Heart left ventricle (tissue), 16 donors: ENCODE measurements at regions of chr6 and their contacts with region 1.

Region 1: GRCh38 chr6:137707590-137708360 is 159.3 kb upstream of the TNFAIP3 start:
- DNase-seq: peak; percentile 61 to 72 (median 64)
- ATAC-seq: peak in 3 of 4 donors; percentile 60 to 68 (median 63)
- H3K4me3 ChIP-seq: peak overlapping the region in 6 of 12 donors; percentile 11 to 35 (median 24)
- H3K27ac ChIP-seq: peak overlapping the region in 2 of 12 donors; percentile 7 to 53
- H3K4me1 ChIP-seq: peaks cover 0 to 36% (median 15%) of the 10 kb centered on the region in 12 donors
- H3K27me3 ChIP-seq: no peaks in the 10 kb centered on the region
- CTCF ChIP-seq: peak; percentile 59 to 88 (median 82)
- POLR2A ChIP-seq: no peak

Region 2: DNA sequence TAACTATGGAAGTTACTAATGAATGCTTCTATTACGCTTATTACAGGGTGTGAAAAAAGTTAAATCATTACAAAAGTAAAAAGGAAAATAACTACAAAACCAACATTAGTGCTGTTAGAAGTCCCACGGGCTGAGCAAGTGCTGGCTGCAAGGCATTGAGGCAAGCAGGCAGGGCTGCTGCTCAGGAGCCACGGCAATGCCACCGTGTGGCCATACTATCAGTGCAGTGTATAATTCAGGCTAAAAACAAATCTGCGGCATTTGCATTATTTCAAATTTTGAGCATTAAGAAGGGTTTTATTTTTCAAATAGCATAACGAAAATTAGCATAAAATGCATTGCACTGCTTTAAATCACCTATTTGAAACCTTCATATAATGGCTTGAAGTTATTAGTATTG is 505.7 kb before region 1 on chr6:
- intact Hi-C with region 1: no loop called
- DNase-seq: peak in 3 of 5 donors; percentile 27 to 38 (median 33)
- ATAC-seq: peak; percentile 68 to 83 (median 77)
- H3K4me3 ChIP-seq: no peak overlapping the region
- H3K27ac ChIP-seq: no peak overlapping the region
- H3K4me1 ChIP-seq: peaks cover 0 to 44% (median 14%) of the 10 kb centered on the region in 12 donors
- H3K27me3 ChIP-seq: no peaks in the 10 kb centered on the region
- CTCF ChIP-seq: peak; percentile 20 to 61 (median 50)
- POLR2A ChIP-seq: no peak

Region 3: DNA sequence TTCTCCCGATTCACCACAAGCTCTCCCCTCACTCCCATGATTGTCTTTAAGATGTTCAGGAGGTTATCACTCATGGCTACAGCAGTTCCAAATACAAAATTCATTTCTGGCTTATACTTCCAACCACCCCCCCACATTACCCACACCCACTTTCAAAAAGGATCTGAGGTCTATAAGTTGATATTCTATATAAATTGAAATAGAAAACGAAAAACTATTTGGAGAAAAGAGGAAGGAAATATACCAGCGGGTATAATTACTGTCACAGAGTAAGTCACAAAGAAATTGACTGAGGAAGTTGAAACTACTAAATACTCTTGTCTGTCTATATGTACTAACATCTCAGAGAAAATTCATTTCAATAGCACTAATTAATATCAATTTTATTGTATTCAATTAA is 46.6 kb after region 1 on chr6:
- intact Hi-C with region 1: no loop called
- DNase-seq: no peak
- ATAC-seq: no peak
- H3K4me3 ChIP-seq: no peak overlapping the region
- H3K27ac ChIP-seq: peak overlapping the region in 1 of 12 donors; percentile 28
- H3K4me1 ChIP-seq: peaks cover 0 to 29% (median 0%) of the 10 kb centered on the region in 12 donors
- H3K27me3 ChIP-seq: no peaks in the 10 kb centered on the region
- CTCF ChIP-seq: no peak
- POLR2A ChIP-seq: no peak

Region 4: DNA sequence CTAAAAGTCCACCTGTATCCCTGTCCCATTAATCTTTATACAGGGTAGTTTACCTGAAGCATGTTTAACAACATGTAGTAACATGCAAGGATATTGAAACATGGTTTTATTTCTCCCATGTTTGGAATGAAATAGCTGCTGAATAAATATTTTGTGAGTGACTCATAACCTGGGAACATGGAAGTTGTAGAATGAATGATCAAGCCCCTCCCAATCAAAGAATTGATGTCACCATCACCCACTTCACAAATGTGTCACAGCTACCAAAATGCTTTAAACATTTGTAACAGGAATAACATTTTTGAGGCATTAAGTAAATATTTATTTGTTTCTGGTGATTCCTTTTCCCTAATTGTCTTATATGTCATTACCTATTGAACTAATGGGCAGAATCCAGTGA is 100.4 kb after region 1 on chr6:
- intact Hi-C with region 1: loop called in 3 of 10 experiments (anchors 5 kb)
- DNase-seq: no peak
- ATAC-seq: no peak
- H3K4me3 ChIP-seq: no peak overlapping the region
- H3K27ac ChIP-seq: no peak overlapping the region
- H3K4me1 ChIP-seq: peaks cover 0 to 44% (median 4%) of the 10 kb centered on the region in 12 donors
- H3K27me3 ChIP-seq: no peaks in the 10 kb centered on the region
- CTCF ChIP-seq: no peak
- POLR2A ChIP-seq: no peak

Region 5: GRCh38 chr6:137944793-137945498 is 237.2 kb after region 1 on chr6:
- intact Hi-C with region 1: loop called (anchors 1 to 5 kb)
- DNase-seq: no peak
- ATAC-seq: peak; percentile 59 to 88 (median 82)
- H3K4me3 ChIP-seq: peak overlapping the region in 1 of 12 donors; percentile 23
- H3K27ac ChIP-seq: no peak overlapping the region
- H3K4me1 ChIP-seq: peaks cover 0 to 16% (median 0%) of the 10 kb centered on the region in 12 donors
- H3K27me3 ChIP-seq: no peaks in the 10 kb centered on the region
- CTCF ChIP-seq: peak; percentile 63 to 88 (median 78)
- POLR2A ChIP-seq: no peak

Region 6: DNA sequence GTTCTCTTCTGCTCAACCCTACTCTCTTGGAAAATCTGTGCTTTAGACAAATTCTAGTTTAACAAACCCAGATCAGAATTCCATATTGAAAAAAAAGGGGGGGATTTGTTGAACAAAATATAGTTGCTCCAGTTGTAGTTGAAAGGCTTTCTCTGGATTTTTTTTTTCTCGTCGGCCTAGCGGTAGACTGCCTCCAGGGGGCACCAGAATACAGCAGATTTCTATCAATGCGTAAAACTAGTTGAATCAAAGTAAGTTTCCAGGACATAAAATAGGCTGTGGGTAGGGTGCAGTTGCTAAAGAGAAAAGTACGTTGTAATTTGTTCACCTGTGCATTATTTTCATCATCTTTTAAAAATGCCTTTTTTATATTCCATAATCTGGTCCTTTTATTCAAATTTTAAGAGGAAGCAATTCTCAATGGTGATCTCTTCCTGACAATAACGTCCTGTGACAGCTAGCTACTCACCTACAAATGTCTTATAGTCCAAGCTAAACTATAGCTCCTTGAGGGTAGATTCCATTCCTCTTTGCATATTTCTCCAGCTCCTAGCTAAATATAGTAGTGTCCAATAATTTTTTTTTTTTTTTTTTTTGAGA is 294.1 kb after region 1 on chr6:
- intact Hi-C with region 1: loop called in 5 of 10 experiments (anchors 2 to 5 kb)
- DNase-seq: peak in 4 of 5 donors; percentile 34 to 57 (median 35)
- ATAC-seq: peak in 1 of 4 donors; percentile 51
- H3K4me3 ChIP-seq: no peak overlapping the region
- H3K27ac ChIP-seq: no peak overlapping the region
- H3K4me1 ChIP-seq: no peaks in the 10 kb centered on the region
- H3K27me3 ChIP-seq: no peaks in the 10 kb centered on the region
- CTCF ChIP-seq: peak; percentile 73 to 90 (median 86)
- POLR2A ChIP-seq: no peak

Region 7: GRCh38 chr6:138109042-138109997 is 401.5 kb after region 1 on chr6:
- intact Hi-C with region 1: loop called in 8 of 10 experiments (anchors 2 to 10 kb)
- DNase-seq: peak in 4 of 5 donors; percentile 44 to 57 (median 50)
- ATAC-seq: peak in 1 of 4 donors; percentile 32
- H3K4me3 ChIP-seq: no peak overlapping the region
- H3K27ac ChIP-seq: no peak overlapping the region
- H3K4me1 ChIP-seq: peaks cover 0 to 19% (median 6%) of the 10 kb centered on the region in 12 donors
- H3K27me3 ChIP-seq: peaks cover 0 to 38% (median 5%) of the 10 kb centered on the region in 9 donors
- CTCF ChIP-seq: peak; percentile 91 to 99 (median 96)
- POLR2A ChIP-seq: no peak